Breast epithelium (tissue), 4 donors: ENCODE measurements at regions of chr4 and their contacts with region 1.

Region 1: DNA sequence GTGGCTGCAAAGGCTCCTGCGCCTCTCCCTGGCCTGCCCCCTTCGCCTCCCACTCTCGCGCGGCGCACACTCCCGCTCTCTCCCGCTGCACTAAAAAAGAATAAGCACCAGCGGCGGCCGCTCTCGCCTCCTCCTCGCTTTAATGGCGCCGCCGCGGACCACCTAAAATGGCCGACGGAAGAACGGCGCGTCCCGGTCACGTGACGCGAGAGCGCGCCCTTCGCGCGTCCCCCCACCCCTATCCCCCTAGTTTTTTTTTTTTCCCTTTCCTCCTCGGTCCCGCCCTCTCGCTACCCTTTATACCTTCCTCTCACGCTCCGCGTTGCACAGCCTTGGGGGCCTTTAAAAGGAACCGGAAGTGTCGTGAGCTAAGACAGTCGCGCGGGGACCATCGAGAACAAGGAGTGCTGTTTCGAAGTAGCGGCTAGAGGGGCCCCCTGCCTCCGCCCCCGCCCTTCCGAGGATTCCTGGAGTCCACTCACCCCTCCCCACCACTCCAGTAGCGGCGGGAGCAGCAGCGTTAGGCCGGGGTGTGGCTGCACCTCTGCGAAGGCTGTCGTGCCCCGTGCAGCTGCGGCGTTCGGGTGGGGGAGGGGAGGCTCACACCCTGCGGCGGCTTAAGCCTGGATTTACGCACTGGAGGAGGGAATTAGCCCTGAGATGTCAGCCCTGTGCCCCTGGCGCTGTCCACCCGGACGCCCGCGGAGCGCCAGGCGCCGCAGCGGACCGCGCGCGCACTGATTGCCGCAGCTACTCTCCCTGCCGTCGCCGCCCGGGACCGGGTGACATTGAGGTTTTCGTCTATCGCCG is at the start of gene HNRNPD:
- DNase-seq: peak; percentile 96 to 98
- H3K4me3 ChIP-seq: peak within 1 kb of the TSS; percentile 82 to 98 (median 88)
- H3K27ac ChIP-seq: peak within 1 kb of the TSS; percentile 99 to 100
- H3K4me1 ChIP-seq: peaks cover 0 to 10% of the 10 kb centered on the region in 2 donors
- H3K27me3 ChIP-seq: no peaks in the 10 kb centered on the region
- CTCF ChIP-seq: no peak
- POLR2A ChIP-seq: peak; percentile 77
- total RNA-seq, gene HNRNPD: 85.1 to 130 (median 122) TPM

Region 2: DNA sequence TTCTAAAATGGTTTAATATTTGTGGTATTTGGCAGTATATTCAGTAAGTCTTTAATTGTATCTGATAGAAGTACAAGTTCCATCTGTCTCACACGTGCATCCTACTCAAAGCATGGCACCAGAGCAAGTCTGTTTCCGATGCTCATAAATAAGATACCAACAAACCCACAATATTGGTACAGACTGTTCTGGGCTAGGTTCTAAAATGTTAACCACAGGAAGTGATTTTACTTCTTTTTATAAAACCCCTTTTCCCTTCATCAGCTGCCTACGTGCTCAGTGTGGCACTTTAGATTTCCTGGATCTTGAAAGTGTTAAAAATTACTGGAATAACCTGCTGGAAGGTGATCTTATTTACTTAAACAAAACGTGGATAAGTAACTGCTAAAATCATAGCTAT is 1873.4 kb before region 1 on chr4:
- intact Hi-C with region 1: no loop called
- DNase-seq: no peak
- H3K4me3 ChIP-seq: no peak overlapping the region
- H3K27ac ChIP-seq: no peak overlapping the region
- H3K4me1 ChIP-seq: no peaks in the 10 kb centered on the region
- H3K27me3 ChIP-seq: no peaks in the 10 kb centered on the region
- CTCF ChIP-seq: no peak
- POLR2A ChIP-seq: no peak

Region 3: DNA sequence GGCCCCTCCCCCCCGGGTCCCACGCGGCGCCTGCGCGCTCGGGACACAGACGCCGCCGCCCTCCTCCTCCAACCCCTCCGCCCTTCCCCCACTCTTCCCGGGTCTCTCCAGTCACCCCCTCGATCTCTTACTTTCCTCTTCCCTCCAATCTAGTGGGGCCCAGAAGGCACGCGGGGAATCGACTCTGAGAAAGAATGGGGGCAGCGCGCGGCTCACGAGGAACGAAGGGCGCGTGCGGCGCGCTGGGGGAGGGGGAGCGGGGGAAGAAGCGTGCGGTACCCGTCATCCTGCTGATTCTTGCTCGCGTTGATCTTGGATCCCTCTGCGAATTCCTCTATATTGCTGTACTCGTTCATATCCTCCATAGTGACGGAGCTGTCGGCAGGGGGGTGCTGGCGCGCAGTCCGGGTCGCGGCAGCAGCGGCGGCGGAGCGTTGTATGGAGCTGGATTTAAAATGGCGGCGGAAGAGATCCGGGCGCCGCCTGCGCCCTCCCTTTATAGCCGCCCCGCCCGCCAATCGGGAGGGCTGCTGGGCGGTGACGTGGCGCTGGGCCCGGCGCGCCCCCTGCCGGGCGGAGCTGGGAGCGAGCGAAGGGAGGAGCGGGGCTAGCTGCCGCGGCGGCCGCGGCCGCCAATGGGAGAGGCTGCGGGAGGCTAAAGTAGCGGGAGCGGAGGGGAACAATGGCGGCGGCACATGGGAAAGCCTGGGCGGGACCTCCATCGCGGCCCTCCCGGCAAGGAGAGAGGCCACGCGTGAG is 55.1 kb after region 1 on chr4:
- intact Hi-C with region 1: loop called (anchors 1 kb)
- DNase-seq: peak; percentile 89 to 93
- H3K4me3 ChIP-seq: peak overlapping the region; percentile 71 to 97 (median 96)
- H3K27ac ChIP-seq: peak overlapping the region; percentile 94 to 99
- H3K4me1 ChIP-seq: peaks cover 0 to 3% of the 10 kb centered on the region in 2 donors
- H3K27me3 ChIP-seq: no peaks in the 10 kb centered on the region
- CTCF ChIP-seq: peak in 2 of 3 donors; percentile 77 to 92
- POLR2A ChIP-seq: peak; percentile 71